ENCODE measurements at regions of chr4 and their contacts with region 1.

Region 1: DNA sequence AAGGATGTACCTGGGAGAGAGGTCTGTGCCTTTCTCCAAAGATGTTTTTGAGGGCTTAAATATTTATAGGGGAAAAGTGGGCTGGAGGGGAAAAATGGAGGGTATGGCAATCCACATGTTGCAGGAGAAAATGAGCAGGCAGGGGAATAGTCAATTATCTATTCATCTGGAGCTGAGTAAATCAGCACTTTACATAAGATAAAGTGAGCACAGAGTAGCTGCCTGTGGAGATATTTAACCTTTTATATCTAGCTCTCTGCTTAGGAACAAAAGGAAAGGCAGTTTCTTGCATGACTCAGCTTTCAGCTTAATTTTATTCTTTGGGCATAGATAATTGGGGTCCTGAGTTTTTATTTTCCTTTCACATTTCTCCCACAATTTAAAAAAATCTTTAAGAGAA is 93.6 kb upstream of the NPY2R start:
- DNase-seq: no peak
- H3K4me3 ChIP-seq: no peak overlapping the region
- H3K27ac ChIP-seq: no peak overlapping the region
- H3K4me1 ChIP-seq: no peaks in the 10 kb centered on the region
- H3K27me3 ChIP-seq: no peaks in the 10 kb centered on the region
- CTCF ChIP-seq: no peak

Region 2: GRCh38 chr4:155299103-155299502 is 184.3 kb after region 1 on chr4:
- intact Hi-C with region 1: loop called (anchors 5 kb)
- DNase-seq: no peak
- H3K4me3 ChIP-seq: no peak overlapping the region
- H3K27ac ChIP-seq: no peak overlapping the region
- H3K4me1 ChIP-seq: no peaks in the 10 kb centered on the region
- H3K27me3 ChIP-seq: no peaks in the 10 kb centered on the region
- CTCF ChIP-seq: no peak

Measured in tibial artery (tissue), 4 donors.